Endothelial cell of umbilical vein (primary cell): ENCODE measurements at regions of chr2 and their contacts with region 1.

Region 1: DNA sequence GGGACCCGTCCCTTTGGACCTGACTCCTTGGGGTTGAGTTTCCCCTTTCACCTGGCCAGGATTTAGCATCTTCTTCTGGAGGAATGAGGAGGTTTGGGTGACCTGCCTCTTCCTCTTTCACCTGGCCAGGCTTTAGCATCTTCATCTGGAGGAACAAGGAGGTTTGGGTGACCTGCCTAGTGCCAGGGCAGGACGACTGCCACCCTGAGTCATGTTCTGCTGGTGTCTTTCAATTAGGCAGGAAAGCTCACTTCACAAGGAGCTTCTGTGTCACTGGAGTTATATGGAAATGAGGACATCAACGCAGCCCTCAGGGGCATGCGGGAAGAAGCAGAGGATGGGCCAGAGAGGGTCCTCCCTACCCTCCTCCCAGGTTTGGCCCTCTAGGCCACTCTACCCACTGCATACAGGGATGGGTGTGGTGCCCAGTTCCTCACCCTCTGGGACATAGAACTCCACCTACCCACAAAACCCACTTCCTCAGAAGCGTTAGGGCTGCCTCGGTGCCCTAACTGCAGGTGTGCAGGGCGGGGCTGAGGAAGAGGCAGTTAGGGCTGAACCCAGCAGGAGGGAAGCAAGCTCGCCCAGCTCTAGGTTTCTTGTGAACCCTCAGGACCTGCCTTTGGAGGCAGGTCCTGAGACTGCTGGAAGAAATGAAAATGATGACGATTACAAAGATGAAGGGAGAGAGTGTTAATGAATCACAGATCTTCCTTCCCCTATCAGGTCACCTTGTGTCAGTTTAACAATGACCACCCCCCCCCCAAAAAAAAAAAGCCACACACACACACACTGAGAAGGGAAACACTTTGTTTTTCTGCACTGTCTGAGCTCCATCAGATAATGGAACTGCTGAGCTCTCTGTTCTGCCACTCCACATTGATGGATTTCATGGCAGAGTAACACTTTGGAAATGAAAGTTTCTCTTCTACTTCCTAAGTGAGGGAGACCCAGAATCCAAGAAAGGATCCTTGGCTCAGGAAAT is 71.0 kb downstream of the ARL4C start:
- DNase-seq: no peak
- H3K4me3 ChIP-seq: no peak overlapping the region
- H3K27ac ChIP-seq: no peak overlapping the region
- H3K4me1 ChIP-seq: peaks cover 36% of the 10 kb centered on the region
- H3K27me3 ChIP-seq: no peaks in the 10 kb centered on the region
- CTCF ChIP-seq: no peak
- POLR2A ChIP-seq: no peak

Region 2: DNA sequence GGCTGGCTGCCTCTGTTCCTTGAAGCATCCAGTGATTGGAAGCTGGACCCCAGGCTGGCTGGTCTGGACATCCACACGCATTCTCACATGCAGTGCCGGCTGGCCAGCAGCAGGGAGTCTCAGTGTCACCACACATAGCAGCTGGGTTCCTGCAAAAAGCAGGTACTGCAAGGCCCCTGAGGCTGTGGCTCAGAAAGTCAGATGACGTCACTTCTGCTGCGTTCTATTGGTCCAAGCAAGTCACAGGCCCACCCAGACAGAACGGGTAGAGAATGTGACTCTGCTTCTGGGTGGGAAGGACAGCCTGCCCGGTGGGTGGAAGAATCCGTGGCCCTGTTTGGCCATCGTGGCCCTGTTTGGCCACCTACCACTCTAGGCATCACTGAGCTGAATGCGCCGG is 426.7 kb before region 1 on chr2:
- CTCF ChIA-PET with region 1: no interaction called
- POLR2A ChIA-PET with region 1: no interaction called
- dilution Hi-C with region 1: no loop called
- intact Hi-C with region 1: no loop called
- DNase-seq: no peak
- H3K4me3 ChIP-seq: no peak overlapping the region
- H3K27ac ChIP-seq: no peak overlapping the region
- H3K4me1 ChIP-seq: no peaks in the 10 kb centered on the region
- H3K27me3 ChIP-seq: peaks cover 0 to 3% of the 10 kb centered on the region in 2 experiments
- CTCF ChIP-seq: no peak
- POLR2A ChIP-seq: no peak

Region 3: DNA sequence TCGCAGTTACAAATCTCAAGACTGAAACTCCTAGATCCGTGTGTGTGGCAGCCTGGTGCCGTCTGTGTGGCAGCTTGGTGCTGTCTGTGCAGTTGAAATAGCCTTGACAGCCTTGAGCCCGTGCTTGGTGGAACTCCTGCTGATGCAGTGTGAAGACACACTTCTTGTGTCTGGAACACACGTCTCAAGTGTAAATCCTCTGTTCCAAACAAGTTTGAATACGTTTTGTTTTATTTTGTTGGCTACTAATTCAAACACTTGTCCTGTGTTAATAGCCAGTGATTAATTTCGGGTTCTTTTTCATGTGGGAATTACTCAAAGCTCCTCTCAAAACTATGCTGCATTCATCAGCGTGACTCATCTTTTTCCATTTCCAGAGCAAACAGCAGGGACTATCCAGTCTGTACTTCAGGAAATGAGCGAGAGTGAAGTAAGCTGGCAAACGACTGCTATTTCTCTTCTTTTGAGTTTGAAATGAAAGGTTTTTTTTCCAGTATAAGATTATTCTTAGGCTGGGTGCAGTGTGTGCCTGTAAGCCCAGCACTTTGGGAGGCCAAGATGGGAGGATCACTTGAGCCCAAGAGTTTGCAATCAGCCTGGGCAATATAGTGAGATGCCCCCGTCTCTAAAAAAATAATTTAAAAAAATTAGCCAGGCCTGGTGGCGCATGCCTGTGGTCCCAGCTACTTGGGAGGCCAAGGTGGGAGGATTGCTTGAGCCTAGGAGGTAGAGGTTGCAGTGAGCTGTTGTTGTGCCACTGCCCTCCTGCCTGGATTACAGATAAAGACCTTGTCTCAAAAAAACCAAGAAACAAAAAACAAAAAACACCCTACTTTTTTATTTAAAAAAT is 222.6 kb before region 1 on chr2:
- CTCF ChIA-PET with region 1: no interaction called
- POLR2A ChIA-PET with region 1: no interaction called
- dilution Hi-C with region 1: no loop called
- intact Hi-C with region 1: loop called (anchors 5 kb)
- DNase-seq: peak; percentile 98
- H3K4me3 ChIP-seq: peak overlapping the region in 1 of 3 experiments; percentile 14
- H3K27ac ChIP-seq: peak overlapping the region; percentile 93
- H3K4me1 ChIP-seq: peaks cover 17% of the 10 kb centered on the region
- H3K27me3 ChIP-seq: no peaks in the 10 kb centered on the region
- CTCF ChIP-seq: no peak
- POLR2A ChIP-seq: no peak

Region 4: DNA sequence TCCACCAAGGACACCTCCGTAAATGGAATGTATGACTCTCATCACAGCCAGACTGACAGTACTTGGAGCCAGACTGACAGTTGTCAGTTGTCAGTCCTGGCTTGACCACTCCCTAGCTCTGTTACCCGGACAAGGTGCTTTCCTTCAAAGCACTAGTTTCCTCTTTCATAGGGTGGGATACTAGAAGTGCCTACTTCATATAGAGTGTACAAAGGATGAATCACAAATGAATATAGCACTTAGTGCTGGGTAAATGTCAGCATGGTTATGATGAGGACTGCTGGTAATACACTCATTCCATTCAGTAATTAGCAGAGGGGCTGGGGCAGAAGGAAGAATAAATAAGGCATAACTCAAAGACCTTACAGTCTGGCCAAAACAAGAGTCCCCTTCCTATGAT is 20.4 kb before region 1 on chr2:
- CTCF ChIA-PET with region 1: interaction called, 9 read pairs
- POLR2A ChIA-PET with region 1: no interaction called
- dilution Hi-C with region 1: no loop called
- intact Hi-C with region 1: loop called (anchors 1 kb)
- DNase-seq: no peak
- H3K4me3 ChIP-seq: no peak overlapping the region
- H3K27ac ChIP-seq: peak overlapping the region; percentile 4
- H3K4me1 ChIP-seq: peaks cover 14% of the 10 kb centered on the region
- H3K27me3 ChIP-seq: peaks cover 0 to under 1% of the 10 kb centered on the region in 2 experiments
- CTCF ChIP-seq: no peak
- POLR2A ChIP-seq: no peak

Region 5: DNA sequence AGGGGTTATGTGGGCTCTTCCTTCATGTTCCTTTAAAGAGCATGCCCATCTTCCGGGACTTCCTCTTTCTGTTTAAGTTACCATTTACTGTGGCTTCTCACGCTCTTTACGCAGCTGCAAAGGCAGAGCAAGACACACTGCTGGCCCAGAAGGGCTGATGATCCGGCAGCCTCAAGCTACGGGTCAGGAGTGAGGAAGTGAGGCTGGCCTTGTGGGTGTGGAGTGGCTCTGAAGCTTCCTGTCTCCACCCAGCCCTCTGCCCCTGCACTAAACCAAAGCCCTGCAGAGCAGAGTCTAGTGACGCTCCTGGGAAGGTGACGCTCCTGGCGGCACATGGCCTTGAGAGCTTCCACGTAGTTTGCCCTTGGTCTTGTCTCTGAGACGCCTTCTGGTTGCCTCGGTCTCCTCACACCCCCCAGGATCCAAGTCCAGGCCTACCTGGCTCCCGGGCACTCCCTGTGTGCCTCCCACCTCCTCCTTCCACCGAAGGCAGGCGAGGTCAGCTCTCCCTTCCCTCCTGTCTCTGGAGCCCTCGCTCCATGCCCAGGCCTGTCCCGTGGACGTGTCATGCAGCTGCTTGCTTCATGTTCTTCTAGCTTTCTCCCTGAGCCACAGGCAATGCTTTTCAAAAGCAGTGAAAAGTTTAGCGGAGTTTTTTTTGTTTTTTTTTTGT is 20.6 kb after region 1 on chr2:
- CTCF ChIA-PET with region 1: interaction called, 4 read pairs
- POLR2A ChIA-PET with region 1: interaction called, 9 read pairs
- dilution Hi-C with region 1: no loop called
- intact Hi-C with region 1: loop called (anchors 1 kb)
- DNase-seq: peak; percentile 52
- H3K4me3 ChIP-seq: no peak overlapping the region
- H3K27ac ChIP-seq: peak overlapping the region; percentile 2
- H3K4me1 ChIP-seq: peaks cover 26% of the 10 kb centered on the region
- H3K27me3 ChIP-seq: no peaks in the 10 kb centered on the region
- CTCF ChIP-seq: no peak
- POLR2A ChIP-seq: no peak

Region 6: DNA sequence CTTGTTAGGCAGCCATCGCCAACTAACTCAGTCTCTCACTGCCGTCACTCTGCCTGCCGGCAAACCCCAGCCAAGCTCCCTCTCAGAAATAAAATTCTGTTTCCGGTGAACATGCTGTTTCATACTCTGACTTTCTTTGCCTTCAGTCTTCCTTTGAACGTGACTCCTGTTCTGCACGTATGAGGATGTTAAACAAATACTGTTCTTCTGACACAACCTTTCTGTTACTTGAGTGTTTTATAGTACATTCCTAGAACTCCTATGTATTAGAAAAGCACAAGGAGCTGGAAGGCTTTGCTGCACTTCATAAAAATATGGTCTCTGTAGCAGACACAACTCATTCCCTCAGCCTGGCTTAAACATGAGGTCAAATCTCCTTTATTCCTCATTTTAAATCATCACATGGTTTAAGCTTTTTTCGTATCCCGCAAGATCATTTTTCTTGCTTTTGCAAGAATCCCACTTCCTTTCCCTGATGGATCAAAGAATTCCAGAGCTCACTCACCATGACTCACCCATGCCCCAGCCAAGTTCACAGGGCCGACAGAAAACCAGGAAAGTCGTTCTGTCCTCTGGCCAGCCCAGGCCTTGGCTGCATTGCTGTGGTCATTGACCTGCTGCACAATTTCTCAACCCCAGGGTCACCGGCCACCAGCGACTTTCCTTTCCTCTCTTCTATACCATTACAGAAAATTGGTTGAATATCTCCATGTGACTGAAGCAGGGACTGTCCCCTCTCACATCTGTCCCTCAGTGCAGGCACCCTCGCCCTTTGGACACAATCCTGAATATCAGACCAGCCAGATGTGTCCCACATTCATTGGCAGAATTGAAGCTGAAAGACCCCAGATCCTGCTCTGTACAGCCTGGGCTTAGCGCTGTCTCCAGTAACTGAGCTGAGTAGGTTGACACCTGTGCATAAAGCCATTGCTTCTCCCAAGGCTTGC is 254.1 kb after region 1 on chr2:
- CTCF ChIA-PET with region 1: no interaction called
- POLR2A ChIA-PET with region 1: no interaction called
- dilution Hi-C with region 1: no loop called
- intact Hi-C with region 1: loop called (anchors 10 kb)
- DNase-seq: peak; percentile 93
- H3K4me3 ChIP-seq: no peak overlapping the region
- H3K27ac ChIP-seq: peak overlapping the region; percentile 69
- H3K4me1 ChIP-seq: peaks cover 20% of the 10 kb centered on the region
- H3K27me3 ChIP-seq: no peaks in the 10 kb centered on the region
- CTCF ChIP-seq: no peak
- POLR2A ChIP-seq: no peak